Adrenal gland (tissue), 19 donors: ENCODE measurements at regions of chr1 and their contacts with region 1.

Region 1: DNA sequence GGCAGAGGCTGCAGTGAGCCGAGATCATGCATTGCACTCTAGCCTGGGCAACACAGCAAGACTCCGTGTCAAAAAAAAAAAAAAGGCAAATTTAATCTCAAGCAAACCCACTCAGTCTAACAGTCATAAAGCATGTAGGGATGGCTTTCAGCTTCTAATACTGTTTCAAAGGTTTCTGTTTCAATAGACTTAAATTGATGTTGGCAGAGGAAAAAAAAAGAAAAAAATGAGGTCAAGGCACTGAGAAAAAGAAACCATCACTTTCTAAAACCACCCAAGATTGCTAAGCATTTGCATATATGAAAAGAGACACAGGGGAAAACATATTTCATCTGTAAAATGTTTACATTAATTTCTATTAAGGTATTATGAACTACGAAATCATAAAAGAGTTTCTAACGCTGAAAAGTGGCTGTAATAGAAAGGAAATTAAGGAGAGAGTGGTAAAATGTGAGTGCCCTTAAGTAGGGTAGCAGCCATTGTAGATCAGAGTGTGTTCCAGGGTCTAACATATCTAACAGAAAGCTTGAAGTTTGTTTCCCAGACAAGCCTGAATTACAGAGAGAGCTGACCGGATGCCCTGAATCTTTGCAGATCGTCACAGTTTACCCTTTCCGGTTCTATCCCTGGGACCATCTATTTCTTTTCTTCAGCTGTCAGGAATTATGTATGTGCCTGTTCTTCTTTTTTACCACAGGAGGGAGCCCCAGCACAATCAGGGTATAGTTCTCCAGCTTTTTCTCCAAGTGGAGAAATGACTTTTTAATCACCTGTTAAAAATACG is 70.0 kb downstream of the PLD5 start:
- DNase-seq: peak in 3 of 7 donors; percentile 9 to 28 (median 16)
- H3K4me3 ChIP-seq: peak overlapping the region in 1 of 4 donors; percentile 27
- H3K27ac ChIP-seq: no peak overlapping the region
- H3K4me1 ChIP-seq: peaks cover 0 to 8% of the 10 kb centered on the region in 2 donors
- H3K27me3 ChIP-seq: peaks cover 3% of the 10 kb centered on the region
- CTCF ChIP-seq: peak; percentile 50 to 69 (median 58)
- POLR2A ChIP-seq: no peak

Region 2: DNA sequence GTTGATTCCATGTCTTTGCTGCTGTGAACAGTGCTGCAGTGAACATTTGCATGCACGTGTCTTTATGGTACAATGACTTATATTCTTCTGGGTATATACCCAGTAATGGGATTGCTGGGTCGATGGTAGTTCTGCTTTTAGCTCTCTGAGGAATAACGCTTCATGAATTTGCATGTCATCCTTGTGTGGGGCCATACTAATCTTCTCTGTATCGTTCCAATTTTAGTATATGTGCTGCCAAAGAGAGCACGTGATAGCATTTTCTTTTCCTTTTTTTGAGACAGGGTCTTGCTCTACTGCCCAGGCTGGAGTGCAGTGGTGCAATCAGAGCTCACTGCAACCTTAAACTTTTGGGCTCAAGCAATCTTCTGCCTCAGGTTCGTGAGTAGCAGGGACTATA is 430.6 kb before region 1 on chr1:
- intact Hi-C with region 1: loop called in 1 of 2 experiments (anchors 5 kb)
- DNase-seq: no peak
- H3K4me3 ChIP-seq: no peak overlapping the region
- H3K27ac ChIP-seq: no peak overlapping the region
- H3K4me1 ChIP-seq: peaks cover 0 to 4% of the 10 kb centered on the region in 2 donors
- H3K27me3 ChIP-seq: no peaks in the 10 kb centered on the region
- CTCF ChIP-seq: no peak
- POLR2A ChIP-seq: no peak